CD8-positive, alpha-beta T cell (primary cell): ENCODE measurements at regions of chr6 and their contacts with region 1.

Region 1: DNA sequence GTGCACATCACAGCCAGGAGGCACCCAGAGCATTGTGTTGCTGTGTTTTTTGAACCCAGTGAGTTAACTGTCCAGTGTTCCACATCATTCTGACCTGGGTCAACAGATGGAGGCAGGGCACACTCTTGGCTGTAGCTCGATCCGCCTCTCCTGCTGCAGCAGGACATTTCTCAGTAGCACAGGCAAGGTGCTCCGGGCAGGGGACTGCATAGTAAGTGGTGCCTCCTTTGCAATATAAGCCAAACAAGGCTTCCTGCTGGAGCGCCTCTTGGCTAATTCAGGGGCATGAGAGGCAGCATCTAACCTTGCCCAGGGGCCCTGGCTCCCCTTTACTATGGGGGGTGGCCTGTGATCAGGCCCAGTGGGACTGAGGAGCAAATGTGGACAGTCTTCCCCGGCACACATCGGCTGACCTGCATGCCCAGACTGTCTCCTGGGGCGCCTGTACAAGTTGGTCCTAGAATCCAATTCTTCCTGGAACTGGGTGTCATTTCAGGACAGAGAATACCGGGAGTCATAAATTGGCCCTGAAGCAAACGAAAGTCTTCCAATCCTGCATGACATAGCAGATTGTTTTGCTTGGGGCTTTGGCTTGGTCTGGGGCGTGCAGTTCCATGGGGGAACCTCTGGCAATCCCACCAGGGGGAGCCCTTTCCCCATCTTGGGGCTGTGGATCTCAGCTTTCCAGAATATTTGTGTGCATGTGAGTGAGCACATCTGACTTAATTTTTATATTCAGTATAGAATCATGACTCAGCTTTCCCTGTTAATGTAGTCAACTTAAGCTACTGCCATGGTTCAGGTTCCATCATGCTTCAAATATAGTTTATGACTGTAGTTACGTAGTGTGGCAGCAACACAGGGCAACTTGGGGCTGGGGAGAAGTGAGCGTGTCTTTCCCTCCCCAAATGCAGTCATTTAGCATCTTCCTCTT is 56.0 kb upstream of the DDR1 start:
- DNase-seq: peak; percentile 62 to 88 (median 78)
- ATAC-seq: peak; percentile 81
- H3K4me3 ChIP-seq: peak overlapping the region; percentile 64 to 91
- H3K4me3 Mint-ChIP-seq: peak overlapping the region; percentile 96
- H3K27ac ChIP-seq: peak overlapping the region; percentile 67 to 86
- H3K27ac Mint-ChIP-seq: peak overlapping the region; percentile 97
- H3K4me1 ChIP-seq: peaks cover 46% of the 10 kb centered on the region
- H3K4me1 Mint-ChIP-seq: peaks cover 79% of the 10 kb centered on the region
- H3K27me3 ChIP-seq: no peaks in the 10 kb centered on the region
- H3K27me3 Mint-ChIP-seq: no peaks in the 10 kb centered on the region
- CTCF ChIP-seq: peak; percentile 81

Region 2: DNA sequence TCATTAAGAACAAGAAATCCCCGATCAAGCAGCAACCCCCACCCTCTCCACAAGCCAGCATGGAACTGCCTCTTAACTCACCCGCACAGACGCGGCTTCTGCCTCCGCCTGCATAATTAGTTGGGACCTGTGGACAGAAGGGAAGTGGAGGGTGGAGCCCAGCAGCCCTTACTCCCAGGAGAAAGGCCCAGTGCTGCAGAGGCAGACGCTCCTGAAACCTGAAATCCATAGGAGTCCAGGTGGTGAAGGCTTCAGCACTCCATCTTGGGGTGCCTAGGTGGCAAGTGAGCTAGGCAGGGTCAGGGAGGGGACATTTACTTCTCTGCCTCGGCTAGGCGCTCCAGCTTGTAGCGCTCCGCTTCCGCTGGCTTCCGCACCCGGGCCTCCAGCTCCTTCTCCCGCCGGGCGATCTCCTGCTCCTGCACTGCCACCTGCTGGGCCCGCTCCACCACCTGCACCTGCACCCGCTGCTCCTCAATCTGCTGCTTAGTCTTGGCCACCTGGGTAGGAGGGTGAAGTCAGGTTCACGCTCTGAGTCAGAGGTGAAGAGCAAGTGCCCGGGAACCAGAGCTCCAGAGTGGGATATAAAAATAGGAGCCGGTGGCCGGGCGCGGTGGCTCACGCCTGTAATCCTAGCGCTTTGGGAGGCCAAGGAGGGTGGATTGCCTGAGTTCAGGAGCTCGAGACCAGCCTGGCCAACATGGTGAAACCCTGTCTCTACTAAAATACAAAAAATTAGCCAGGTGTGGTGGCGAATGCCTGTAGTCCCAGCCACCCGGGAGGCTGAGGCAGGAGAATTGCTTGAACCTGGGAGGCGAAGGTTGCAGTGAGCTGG is 97.5 kb before region 1 on chr6:
- CTCF ChIA-PET with region 1: interaction called, 20 read pairs
- POLR2A ChIA-PET with region 1: no interaction called
- intact Hi-C with region 1: no loop called
- DNase-seq: peak; percentile 67 to 91 (median 85)
- ATAC-seq: peak; percentile 98
- H3K4me3 ChIP-seq: peak overlapping the region in 1 of 2 experiments; percentile 21
- H3K4me3 Mint-ChIP-seq: peak overlapping the region; percentile 47
- H3K27ac ChIP-seq: no peak overlapping the region
- H3K27ac Mint-ChIP-seq: no peak overlapping the region
- H3K4me1 ChIP-seq: peaks cover 29% of the 10 kb centered on the region
- H3K4me1 Mint-ChIP-seq: peaks cover 37% of the 10 kb centered on the region
- H3K27me3 ChIP-seq: no peaks in the 10 kb centered on the region
- H3K27me3 Mint-ChIP-seq: no peaks in the 10 kb centered on the region
- CTCF ChIP-seq: peak; percentile 67

Region 3: DNA sequence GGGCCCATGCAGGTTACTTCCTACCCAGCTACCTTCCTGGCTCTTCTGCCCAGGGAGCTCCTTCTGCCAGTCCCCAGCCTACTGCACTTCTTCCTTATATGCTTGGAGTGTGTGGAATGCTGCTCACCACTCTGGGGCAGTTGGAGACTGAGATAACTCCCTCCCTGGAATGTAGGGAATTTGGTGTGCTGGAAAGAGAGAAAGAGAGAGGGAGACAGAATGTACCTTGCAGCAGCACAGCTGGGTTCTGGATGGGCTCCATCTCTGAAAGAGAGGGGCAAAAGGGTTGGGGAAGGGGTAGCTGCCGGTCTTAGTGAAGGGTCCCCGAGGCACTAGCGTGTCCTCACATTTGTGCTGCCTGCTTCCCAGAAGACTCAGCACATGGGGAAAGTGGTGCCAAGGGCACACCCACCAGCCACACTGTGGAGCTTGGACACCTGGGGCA is 15.8 kb after region 1 on chr6:
- CTCF ChIA-PET with region 1: interaction called, 75 read pairs
- POLR2A ChIA-PET with region 1: interaction called, 3 read pairs
- intact Hi-C with region 1: no loop called
- DNase-seq: no peak
- ATAC-seq: no peak
- H3K4me3 ChIP-seq: no peak overlapping the region
- H3K4me3 Mint-ChIP-seq: no peak overlapping the region
- H3K27ac ChIP-seq: no peak overlapping the region
- H3K27ac Mint-ChIP-seq: no peak overlapping the region
- H3K4me1 ChIP-seq: peaks cover 13% of the 10 kb centered on the region
- H3K4me1 Mint-ChIP-seq: peaks cover 38% of the 10 kb centered on the region
- H3K27me3 ChIP-seq: no peaks in the 10 kb centered on the region
- H3K27me3 Mint-ChIP-seq: no peaks in the 10 kb centered on the region
- CTCF ChIP-seq: no peak

Region 4: DNA sequence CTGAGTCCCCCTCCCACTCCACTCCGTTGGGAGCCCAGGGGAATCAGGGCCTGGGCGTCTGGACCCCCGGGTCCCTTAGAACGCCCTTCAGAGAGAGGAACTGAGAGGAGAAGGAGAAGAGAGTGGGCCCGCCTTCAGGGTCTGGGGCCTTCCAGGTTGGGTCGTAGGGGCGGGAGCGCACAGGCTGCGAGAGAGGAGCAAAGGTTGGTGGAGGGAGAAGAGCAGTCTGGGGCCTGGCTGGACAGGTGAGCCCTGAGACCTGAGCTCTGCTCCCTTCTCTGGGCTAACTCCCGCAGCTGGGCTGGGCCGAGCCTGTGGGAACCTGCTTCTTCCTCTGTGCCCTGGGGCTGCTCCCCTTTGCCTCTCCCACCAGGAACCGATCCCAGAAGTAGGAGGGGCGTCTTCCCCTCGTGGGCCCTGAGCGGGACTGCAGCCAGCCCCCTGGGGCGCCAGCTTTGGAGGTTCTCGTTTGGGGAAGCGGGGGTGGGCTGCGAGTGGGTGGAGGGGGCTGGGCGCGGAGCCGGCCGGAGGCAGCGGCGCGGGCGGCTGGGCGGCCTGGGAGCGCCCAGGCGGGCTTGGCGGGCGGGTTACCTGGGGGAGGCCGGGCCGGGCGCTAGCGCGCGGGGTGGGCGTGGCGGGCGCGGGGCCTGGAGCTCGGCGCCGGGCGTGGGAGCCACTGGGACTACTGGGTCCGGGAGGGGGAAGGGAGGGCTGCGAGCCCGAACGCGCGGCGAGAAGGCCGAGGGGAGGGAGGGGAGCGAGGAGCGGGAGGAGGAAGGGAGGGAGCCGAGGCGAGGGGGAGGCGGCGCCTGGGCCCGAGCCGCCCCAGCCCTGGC is 55.6 kb after region 1 on chr6 and contains the start of gene DDR1:
- CTCF ChIA-PET with region 1: interaction called, 113 read pairs
- POLR2A ChIA-PET with region 1: interaction called, 5 read pairs
- intact Hi-C with region 1: no loop called
- DNase-seq: peak in 8 of 9 experiments; percentile 25 to 73 (median 52)
- ATAC-seq: peak; percentile 60
- H3K4me3 ChIP-seq: peak within 1 kb of the TSS; percentile 44 to 55
- H3K4me3 Mint-ChIP-seq: peak within 1 kb of the TSS; percentile 82
- H3K27ac ChIP-seq: peak within 1 kb of the TSS in 1 of 2 experiments; percentile 7
- H3K27ac Mint-ChIP-seq: peak within 1 kb of the TSS; percentile 86
- H3K4me1 ChIP-seq: peaks cover 38% of the 10 kb centered on the region
- H3K4me1 Mint-ChIP-seq: peaks cover 38% of the 10 kb centered on the region
- H3K27me3 ChIP-seq: no peaks in the 10 kb centered on the region
- H3K27me3 Mint-ChIP-seq: no peaks in the 10 kb centered on the region
- CTCF ChIP-seq: no peak
- total RNA-seq, gene DDR1: 5.9 to 8.0 TPM

Region 5: GRCh38 chr6:31042806-31043205 is 214.5 kb after region 1 on chr6:
- CTCF ChIA-PET with region 1: interaction called, 3 read pairs
- POLR2A ChIA-PET with region 1: interaction called, 3 read pairs
- intact Hi-C with region 1: loop called (anchors 1 kb)
- DNase-seq: peak in 8 of 9 experiments; percentile 4 to 56 (median 36)
- ATAC-seq: no peak
- H3K4me3 ChIP-seq: no peak overlapping the region
- H3K4me3 Mint-ChIP-seq: no peak overlapping the region
- H3K27ac ChIP-seq: no peak overlapping the region
- H3K27ac Mint-ChIP-seq: no peak overlapping the region
- H3K4me1 ChIP-seq: no peaks in the 10 kb centered on the region
- H3K4me1 Mint-ChIP-seq: peaks cover 2% of the 10 kb centered on the region
- H3K27me3 ChIP-seq: no peaks in the 10 kb centered on the region
- H3K27me3 Mint-ChIP-seq: peaks cover 34% of the 10 kb centered on the region
- CTCF ChIP-seq: no peak

Region 6: DNA sequence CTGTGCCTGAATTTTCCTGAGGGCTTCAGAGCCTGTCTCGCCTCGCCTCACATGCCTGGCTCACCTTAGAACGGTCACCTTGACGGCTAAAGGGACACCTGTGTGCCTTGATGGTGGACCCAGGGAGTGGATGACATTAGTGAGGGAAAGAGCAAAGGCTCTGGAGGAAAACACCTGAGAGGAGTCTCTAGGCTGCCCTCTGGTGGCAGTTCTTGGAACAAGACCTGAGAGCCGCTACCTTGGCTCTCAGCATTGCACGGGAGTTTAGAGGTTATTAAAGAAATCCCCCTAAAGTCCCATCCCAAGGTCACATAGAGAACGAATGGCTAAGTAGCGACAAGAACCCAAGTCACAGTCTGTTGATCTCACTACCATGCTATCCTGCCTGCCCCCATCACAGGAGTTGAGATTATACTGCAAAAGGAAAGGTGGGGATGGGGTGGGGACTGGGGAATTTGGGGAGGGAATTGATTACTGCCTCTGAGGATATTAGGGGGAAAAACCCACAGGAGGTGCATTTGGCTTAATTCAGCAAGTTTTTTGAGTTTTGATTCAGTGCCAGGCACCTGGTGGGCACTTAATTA is 299.9 kb after region 1 on chr6:
- CTCF ChIA-PET with region 1: interaction called, 3 read pairs
- POLR2A ChIA-PET with region 1: no interaction called
- intact Hi-C with region 1: loop called in 1 of 2 experiments (anchors 5 kb)
- DNase-seq: peak; percentile 50 to 87 (median 74)
- ATAC-seq: peak; percentile 90
- H3K4me3 ChIP-seq: no peak overlapping the region
- H3K4me3 Mint-ChIP-seq: no peak overlapping the region
- H3K27ac ChIP-seq: no peak overlapping the region
- H3K27ac Mint-ChIP-seq: no peak overlapping the region
- H3K4me1 ChIP-seq: no peaks in the 10 kb centered on the region
- H3K4me1 Mint-ChIP-seq: peaks cover 8% of the 10 kb centered on the region
- H3K27me3 ChIP-seq: no peaks in the 10 kb centered on the region
- H3K27me3 Mint-ChIP-seq: peaks cover 6% of the 10 kb centered on the region
- CTCF ChIP-seq: peak; percentile 79